RWPE1 (cell line): ENCODE measurements at regions of chrX and their contacts with region 1.

Region 1: GRCh38 chrX:106973433-106974149 is 26.4 kb downstream of the MORC4 start:
- DNase-seq: no peak
- H3K27ac ChIP-seq: no peak overlapping the region
- CTCF ChIP-seq: no peak

Region 2: DNA sequence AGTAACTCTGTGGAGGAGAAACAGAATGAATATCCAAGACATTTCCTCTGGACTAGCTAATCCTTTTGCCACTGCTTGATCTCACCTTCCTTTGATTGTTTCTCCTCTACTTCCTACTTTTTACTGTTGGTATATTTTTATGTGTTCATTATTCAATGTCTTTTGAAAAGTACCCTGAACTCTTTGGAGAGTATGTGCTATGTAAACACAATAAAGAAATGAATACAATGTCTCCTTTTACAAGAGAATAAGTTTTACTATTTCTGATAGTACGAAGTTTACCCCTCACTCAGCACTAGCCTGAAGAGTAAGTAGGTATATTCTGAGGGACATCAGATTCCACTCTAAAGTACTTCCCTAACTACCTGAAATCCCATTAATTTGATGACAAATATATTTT is 33.5 kb before region 1 on chrX:
- CTCF ChIA-PET with region 1: no interaction called
- POLR2A ChIA-PET with region 1: interaction called, 11 read pairs
- DNase-seq: no peak
- H3K27ac ChIP-seq: no peak overlapping the region
- CTCF ChIP-seq: no peak